Right lobe of liver (tissue), 6 donors: ENCODE measurements at regions of chr22 and their contacts with region 1.

Region 1: GRCh38 chr22:46006379-46007002 is 29.5 kb upstream of the WNT7B start:
- DNase-seq: peak; percentile 89 to 90 (median 89)
- ATAC-seq: peak; percentile 76 to 87 (median 80)
- H3K4me3 ChIP-seq: no peak overlapping the region
- H3K27ac ChIP-seq: peak overlapping the region; percentile 55 to 76 (median 62)
- H3K4me1 ChIP-seq: peaks cover 0 to 18% (median 3%) of the 10 kb centered on the region in 4 donors
- H3K27me3 ChIP-seq: no peaks in the 10 kb centered on the region
- CTCF ChIP-seq: peak; percentile 93 to 97 (median 94)
- POLR2A ChIP-seq: no peak

Region 2: DNA sequence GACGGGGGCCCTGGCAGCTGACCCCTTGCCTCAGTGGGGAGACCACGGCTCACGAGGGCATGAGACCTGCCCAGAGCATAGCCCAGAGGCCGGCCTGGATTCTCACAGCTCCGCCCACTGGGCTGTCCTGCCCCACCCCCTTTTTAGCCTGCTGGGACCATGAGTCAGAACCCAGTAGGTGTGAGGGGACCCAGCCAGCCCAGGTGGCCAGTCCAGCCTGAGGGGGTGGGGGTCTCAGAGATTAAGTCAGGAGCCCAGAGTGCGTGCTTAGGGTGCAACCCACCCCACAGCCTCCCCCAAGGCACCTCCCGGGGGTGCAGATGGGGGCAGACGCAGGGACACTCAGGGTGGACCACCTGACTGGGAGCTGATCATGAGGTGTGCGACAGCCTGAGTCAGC is 103.7 kb after region 1 on chr22:
- intact Hi-C with region 1: loop called (anchors 5 kb)
- DNase-seq: no peak
- ATAC-seq: no peak
- H3K4me3 ChIP-seq: no peak overlapping the region
- H3K27ac ChIP-seq: no peak overlapping the region
- H3K4me1 ChIP-seq: peaks cover 0 to 52% (median 24%) of the 10 kb centered on the region in 4 donors
- H3K27me3 ChIP-seq: no peaks in the 10 kb centered on the region
- CTCF ChIP-seq: no peak
- POLR2A ChIP-seq: no peak

Region 3: DNA sequence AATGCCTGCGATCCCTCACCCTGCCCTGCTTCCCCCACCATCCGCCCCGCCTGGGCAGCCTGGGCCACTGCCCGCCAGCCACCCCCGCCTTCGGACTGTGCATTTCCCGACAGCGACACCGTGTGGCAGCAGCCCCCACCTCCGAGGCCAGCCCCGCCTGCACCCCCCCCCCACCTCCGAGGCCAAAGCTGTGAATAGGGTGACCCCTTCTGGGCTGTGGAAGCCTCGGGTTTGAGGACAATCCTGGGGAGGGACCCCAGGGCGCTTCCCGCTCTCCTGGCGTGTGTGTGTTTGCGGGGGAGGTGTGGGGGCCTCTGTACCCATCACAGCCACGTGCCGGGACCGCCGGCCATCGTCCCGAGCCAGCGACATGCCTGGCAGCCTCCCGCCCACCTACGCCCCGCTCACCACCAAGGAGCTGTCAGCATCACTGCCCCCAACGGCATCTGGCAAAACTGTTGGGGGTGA is 110.0 kb after region 1 on chr22:
- intact Hi-C with region 1: loop called (anchors 5 kb)
- DNase-seq: peak; percentile 94 to 96 (median 95)
- ATAC-seq: peak; percentile 86 to 93 (median 88)
- H3K4me3 ChIP-seq: no peak overlapping the region
- H3K27ac ChIP-seq: no peak overlapping the region
- H3K4me1 ChIP-seq: peaks cover 0 to 17% (median 3%) of the 10 kb centered on the region in 4 donors
- H3K27me3 ChIP-seq: no peaks in the 10 kb centered on the region
- CTCF ChIP-seq: peak in 3 of 4 donors; percentile 73 to 93 (median 82)
- POLR2A ChIP-seq: no peak

Region 4: DNA sequence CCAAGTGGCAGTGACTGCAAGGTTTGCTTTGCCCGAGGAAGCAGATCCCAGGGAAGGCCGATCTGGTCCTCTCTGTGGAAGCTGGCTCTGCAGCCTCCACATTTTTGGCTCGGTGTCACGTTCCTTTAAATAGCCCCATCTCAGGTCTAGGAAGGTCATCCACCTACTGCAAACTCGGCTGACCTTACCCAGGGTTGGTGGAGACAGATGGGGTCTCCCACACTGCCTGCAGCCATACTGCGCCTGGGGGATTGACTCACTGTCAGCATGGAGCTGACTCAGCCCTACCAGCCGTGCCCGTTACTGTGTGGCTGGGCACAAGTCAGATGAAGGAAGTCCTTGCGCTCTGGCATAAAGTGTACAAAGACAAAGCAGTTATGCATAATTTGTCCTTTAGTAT is 226.7 kb after region 1 on chr22:
- intact Hi-C with region 1: no loop called
- DNase-seq: no peak
- ATAC-seq: peak; percentile 10 to 38 (median 25)
- H3K4me3 ChIP-seq: no peak overlapping the region
- H3K27ac ChIP-seq: no peak overlapping the region
- H3K4me1 ChIP-seq: peaks cover 0 to 29% (median 5%) of the 10 kb centered on the region in 4 donors
- H3K27me3 ChIP-seq: no peaks in the 10 kb centered on the region
- CTCF ChIP-seq: no peak
- POLR2A ChIP-seq: no peak